ENCODE measurements at regions of chr20 and their contacts with region 1.

Region 1: DNA sequence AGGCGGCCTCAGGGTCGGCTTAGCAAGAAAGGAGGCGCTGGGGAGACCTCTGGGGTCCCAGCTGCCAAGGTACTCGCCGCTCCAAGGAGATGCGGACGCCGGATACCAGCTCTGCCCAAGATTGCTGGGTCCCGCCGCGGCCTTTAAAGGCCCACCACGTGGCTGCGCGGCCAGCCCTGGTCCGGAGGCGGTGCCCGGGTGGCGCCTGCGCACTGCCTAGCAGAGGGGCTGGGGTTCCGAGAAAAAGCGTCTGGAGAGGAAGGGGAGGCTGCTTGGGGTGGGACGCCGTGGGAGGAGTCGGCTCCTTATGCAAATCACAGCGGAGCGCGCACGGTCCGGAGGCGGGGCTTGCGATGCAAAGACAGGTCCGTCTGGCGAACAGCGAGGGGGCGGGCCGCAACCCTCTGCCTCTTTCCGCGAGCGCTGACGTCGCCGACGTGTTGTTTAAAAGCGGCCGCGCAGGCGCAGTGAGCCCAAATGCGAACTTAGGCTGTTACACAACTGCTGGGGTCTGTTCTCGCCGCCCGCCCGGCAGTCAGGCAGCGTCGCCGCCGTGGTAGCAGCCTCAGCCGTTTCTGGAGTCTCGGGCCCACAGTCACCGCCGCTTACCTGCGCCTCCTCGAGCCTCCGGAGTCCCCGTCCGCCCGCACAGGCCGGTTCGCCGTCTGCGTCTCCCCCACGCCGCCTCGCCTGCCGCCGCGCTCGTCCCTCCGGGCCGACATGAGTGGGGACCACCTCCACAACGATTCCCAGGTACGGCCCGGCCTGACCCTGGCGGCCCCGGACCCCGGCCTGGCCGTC is at the start of gene TOP1:
- DNase-seq: peak; percentile 99
- H3K4me3 ChIP-seq: peak within 1 kb of the TSS; percentile 92 to 98 (median 97)
- H3K27ac ChIP-seq: peak within 1 kb of the TSS; percentile 93
- H3K4me1 ChIP-seq: peaks cover 30% of the 10 kb centered on the region
- H3K27me3 ChIP-seq: no peaks in the 10 kb centered on the region
- CTCF ChIP-seq: no peak
- total RNA-seq, gene TOP1: 13.2 to 92.0 TPM

Region 2: DNA sequence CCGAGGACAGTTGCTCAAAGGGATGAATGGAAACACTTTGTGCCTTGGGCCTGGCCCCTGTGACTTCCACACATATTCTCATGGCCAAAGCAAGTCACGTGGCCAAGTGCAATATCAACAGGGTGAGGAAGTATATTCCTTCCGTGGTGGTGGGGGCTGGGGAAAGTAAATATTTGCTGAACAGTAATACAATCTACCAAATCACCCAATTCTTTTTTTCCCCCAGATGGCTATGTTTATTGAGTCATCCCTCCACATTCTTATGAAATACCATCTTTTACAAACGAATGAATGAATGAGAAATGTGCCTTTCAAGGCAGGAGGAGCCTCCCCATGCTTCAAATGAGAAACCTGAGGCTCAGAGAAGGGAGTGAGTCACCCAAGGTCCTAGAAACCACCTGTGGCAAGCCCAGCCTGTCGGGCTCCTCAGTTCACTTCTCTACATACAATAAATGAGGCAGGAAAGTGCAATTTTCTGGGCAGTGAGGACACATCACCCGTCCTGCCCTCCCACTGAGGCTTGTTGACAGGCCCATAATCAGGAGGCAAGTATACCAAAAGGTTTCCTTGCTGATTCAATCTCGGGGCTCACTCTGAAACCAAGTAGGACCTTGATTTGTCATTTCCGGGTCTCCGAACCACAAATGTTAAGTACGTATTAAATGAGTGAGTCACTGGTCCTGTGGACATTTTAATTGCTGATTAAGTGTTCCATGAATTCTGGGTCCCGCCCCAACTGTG is 25.2 kb before region 1 on chr20:
- CTCF ChIA-PET with region 1: no interaction called
- dilution Hi-C with region 1: no loop called
- in situ Hi-C with region 1: no loop called
- intact Hi-C with region 1: loop called (anchors 1 kb)
- DNase-seq: peak; percentile 99
- H3K4me3 ChIP-seq: peak overlapping the region; percentile 14 to 43 (median 33)
- H3K27ac ChIP-seq: peak overlapping the region; percentile 99
- H3K4me1 ChIP-seq: peaks cover 45% of the 10 kb centered on the region
- H3K27me3 ChIP-seq: no peaks in the 10 kb centered on the region
- CTCF ChIP-seq: no peak

Region 3: GRCh38 chr20:41017390-41018042 is 11.0 kb before region 1 on chr20:
- CTCF ChIA-PET with region 1: interaction called, 3 read pairs
- dilution Hi-C with region 1: no loop called
- in situ Hi-C with region 1: no loop called
- intact Hi-C with region 1: loop called (anchors 1 kb)
- DNase-seq: peak; percentile 79
- H3K4me3 ChIP-seq: no peak overlapping the region
- H3K27ac ChIP-seq: peak overlapping the region; percentile 62
- H3K4me1 ChIP-seq: peaks cover 25% of the 10 kb centered on the region
- H3K27me3 ChIP-seq: no peaks in the 10 kb centered on the region
- CTCF ChIP-seq: no peak

Region 4: GRCh38 chr20:41078329-41078728 is 49.8 kb after region 1 on chr20:
- CTCF ChIA-PET with region 1: no interaction called
- dilution Hi-C with region 1: no loop called
- in situ Hi-C with region 1: no loop called
- intact Hi-C with region 1: loop called (anchors 5 kb)
- DNase-seq: peak; percentile 27
- H3K4me3 ChIP-seq: no peak overlapping the region
- H3K27ac ChIP-seq: no peak overlapping the region
- H3K4me1 ChIP-seq: peaks cover 13% of the 10 kb centered on the region
- H3K27me3 ChIP-seq: no peaks in the 10 kb centered on the region
- CTCF ChIP-seq: peak; percentile 30 to 54